Left ventricle myocardium inferior (tissue), 1 donor: ENCODE measurements at regions of chr3 and their contacts with region 1.

Region 1: GRCh38 chr3:108552267-108553159 is 36.7 kb downstream of the CIP2A start:
- DNase-seq: no peak
- H3K4me3 ChIP-seq: no peak overlapping the region
- H3K27ac ChIP-seq: no peak overlapping the region
- H3K4me1 ChIP-seq: peaks cover 10% of the 10 kb centered on the region
- H3K27me3 ChIP-seq: no peaks in the 10 kb centered on the region
- CTCF ChIP-seq: peak; percentile 66

Region 2: DNA sequence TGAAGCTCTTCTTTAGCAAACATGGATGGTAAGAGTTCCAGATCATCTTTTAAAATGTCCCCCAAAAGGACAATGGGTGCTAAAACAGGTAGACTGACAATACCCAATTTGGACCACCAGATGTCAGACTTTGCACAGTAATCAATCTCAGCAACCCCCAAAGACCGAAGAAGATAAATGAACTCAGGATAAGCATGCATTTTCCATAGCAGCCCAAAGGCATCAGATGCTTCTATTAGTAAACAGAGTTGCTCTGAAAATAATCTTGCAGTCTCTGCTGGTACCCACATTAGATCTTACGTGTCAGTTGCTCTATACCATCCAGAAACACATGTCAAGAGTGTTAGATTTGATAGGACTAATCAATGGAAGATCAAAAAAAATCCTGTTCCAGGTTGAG is 62.7 kb before region 1 on chr3:
- intact Hi-C with region 1: loop called (anchors 2 kb)
- DNase-seq: no peak
- H3K4me3 ChIP-seq: no peak overlapping the region
- H3K27ac ChIP-seq: no peak overlapping the region
- H3K4me1 ChIP-seq: no peaks in the 10 kb centered on the region
- H3K27me3 ChIP-seq: no peaks in the 10 kb centered on the region
- CTCF ChIP-seq: peak; percentile 84